GM13976 (cell line): ENCODE measurements at regions of chr3 and their contacts with region 1.

Region 1: DNA sequence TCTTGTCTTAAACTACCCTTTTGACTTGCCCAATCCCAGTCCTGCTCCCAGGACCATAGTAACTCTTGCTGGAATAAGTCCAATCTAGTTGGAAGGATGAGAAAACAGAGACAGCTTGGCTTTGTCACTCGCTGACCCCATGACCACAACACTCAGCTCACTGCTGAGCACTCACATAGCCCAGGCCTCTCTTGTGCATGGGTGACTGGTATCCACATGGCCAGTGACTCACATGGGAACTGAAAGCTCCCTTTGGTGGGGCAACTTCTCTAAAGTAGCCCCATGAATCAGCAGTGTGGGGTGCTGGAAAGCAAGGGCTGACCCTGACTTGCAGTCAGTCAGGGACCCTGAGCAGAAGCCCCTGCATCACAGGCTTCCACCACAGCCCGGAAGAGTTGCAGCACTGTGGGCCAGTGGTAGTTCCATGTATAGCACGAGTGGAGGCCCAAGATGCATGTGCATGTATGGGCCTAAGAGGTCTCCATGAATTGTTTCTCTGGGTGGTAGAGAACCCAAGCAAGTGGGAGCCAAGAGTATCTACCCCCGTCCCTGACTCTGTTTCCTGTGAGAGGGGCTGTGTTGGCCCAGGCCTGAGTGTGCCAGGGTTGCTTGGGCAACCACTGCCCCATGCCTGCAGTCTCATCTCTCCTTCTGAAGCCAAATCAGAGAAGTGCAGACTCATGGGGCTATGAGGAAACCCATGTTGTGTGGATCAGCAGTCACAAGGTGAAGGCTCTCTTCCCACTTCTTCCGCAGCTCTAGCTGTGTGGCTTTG is 62.1 kb upstream of the XCR1 start:
- DNase-seq: peak; percentile 49
- CTCF ChIP-seq: no peak

Region 2: GRCh38 chr3:46186471-46187340 is 97.3 kb after region 1 on chr3:
- in situ Hi-C with region 1: loop called (anchors 10 kb)
- DNase-seq: peak; percentile 63
- CTCF ChIP-seq: no peak

Region 3: DNA sequence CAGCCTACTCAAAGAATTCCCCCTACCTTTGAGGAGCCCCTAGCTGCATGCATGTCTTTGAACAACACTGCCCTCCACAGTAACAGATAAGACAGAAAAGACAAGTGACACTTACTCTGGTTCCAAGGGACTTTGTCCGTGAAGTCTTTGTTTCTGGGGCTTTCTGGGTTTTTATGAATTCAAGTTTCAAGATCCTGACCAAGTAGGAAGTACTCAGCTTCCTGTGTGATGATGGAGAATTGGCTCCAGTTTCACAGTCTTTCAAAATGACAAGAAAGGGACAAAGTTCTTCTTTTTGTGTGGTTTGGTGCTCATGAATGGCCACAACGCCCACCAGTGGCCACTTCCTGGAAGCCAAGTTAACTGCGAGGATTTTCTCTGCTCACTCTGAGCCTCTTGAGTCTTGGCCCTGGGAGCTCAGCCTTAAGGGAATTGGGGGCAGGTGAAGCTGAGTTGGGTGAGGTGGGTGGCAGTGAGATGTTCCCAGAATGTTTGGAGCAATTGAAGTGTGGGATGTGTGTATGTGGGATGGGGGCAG is 118.8 kb after region 1 on chr3 and contains the start of gene CCR1:
- in situ Hi-C with region 1: loop called (anchors 10 kb)
- DNase-seq: peak; percentile 55
- CTCF ChIP-seq: peak; percentile 57

Region 4: GRCh38 chr3:46378426-46378942 is 289.1 kb after region 1 on chr3:
- in situ Hi-C with region 1: loop called (anchors 10 kb)
- DNase-seq: peak; percentile 59
- CTCF ChIP-seq: peak; percentile 68

Region 5: GRCh38 chr3:46674031-46674845 is 584.8 kb after region 1 on chr3:
- in situ Hi-C with region 1: no loop called
- DNase-seq: no peak
- CTCF ChIP-seq: no peak